Naive thymus-derived CD8-positive, alpha-beta T cell (primary cell): ENCODE measurements at regions of chr9 and their contacts with region 1.

Region 1: DNA sequence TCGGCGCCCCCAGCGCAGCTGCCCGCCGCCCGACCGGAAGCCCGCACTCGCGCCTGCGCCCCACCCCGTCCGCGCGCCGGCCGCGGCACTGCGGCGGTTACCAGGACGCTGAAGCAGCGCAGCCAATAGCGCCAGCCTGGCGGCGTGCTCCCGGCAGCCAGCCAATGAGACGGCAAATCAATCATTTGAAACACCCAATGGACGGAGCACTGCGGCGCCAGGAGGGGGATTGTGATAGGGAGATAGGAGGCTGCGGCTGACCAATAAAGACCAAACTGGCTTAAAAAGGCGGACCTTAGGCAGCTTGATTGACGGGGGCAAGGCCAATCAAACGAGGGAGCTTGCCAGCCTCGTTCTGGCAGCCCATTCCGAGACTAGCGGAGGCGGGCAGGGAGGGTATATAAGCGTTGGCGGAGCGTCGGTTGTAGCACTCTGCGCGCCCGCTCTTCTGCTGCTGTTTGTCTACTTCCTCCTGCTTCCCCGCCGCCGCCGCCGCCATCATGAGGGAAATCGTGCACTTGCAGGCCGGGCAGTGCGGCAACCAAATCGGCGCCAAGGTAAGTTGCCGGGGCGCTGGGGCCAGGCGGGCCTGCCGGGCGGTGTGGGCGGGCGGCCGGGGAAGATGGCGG is at the start of gene TUBB4B:
- DNase-seq: peak in 9 of 10 donors; percentile 89 to 100 (median 98)
- ATAC-seq: peak; percentile 82
- H3K4me3 Mint-ChIP-seq: peak within 1 kb of the TSS; percentile 84 to 97 (median 92)
- H3K27ac Mint-ChIP-seq: peak within 1 kb of the TSS; percentile 88 to 97 (median 92)
- H3K4me1 Mint-ChIP-seq: peaks cover 7 to 40% (median 30%) of the 10 kb centered on the region in 4 donors
- H3K27me3 Mint-ChIP-seq: peaks cover 0 to 3% (median 0%) of the 10 kb centered on the region in 5 donors
- polyA plus RNA-seq, gene TUBB4B: 10.8 to 23.4 (median 22.5) TPM

Region 2: GRCh38 chr9:137114610-137115391 is 126.2 kb before region 1 on chr9 and contains the start of gene DPP7:
- POLR2A ChIA-PET with region 1: interaction called, 11 read pairs
- DNase-seq: peak; percentile 67 to 87 (median 78)
- ATAC-seq: peak; percentile 94
- H3K4me3 Mint-ChIP-seq: peak within 1 kb of the TSS; percentile 45 to 79 (median 73)
- H3K27ac Mint-ChIP-seq: peak within 1 kb of the TSS in 6 of 10 donors; percentile 15 to 80 (median 62)
- H3K4me1 Mint-ChIP-seq: peaks cover 0 to 18% (median 5%) of the 10 kb centered on the region in 4 donors
- H3K27me3 Mint-ChIP-seq: no peaks in the 10 kb centered on the region
- polyA plus RNA-seq, gene DPP7: 98.7 to 126 (median 121) TPM

Region 3: GRCh38 chr9:137188490-137189296 is 52.3 kb before region 1 on chr9 and contains the starts of genes ANAPC2 and SSNA1:
- POLR2A ChIA-PET with region 1: interaction called, 15 read pairs
- DNase-seq: peak; percentile 83 to 95 (median 94)
- ATAC-seq: peak; percentile 79
- H3K4me3 Mint-ChIP-seq: peak within 1 kb of the TSS; percentile 87 to 96 (median 92)
- H3K27ac Mint-ChIP-seq: peak within 1 kb of the TSS; percentile 83 to 98 (median 94)
- H3K4me1 Mint-ChIP-seq: peaks cover 8 to 50% (median 41%) of the 10 kb centered on the region in 4 donors
- H3K27me3 Mint-ChIP-seq: no peaks in the 10 kb centered on the region
- polyA plus RNA-seq, gene ANAPC2: 3.4 to 5.9 (median 4.3) TPM
- polyA plus RNA-seq, gene SSNA1: 97.8 to 123 (median 119) TPM

Region 4: GRCh38 chr9:137223078-137223970 is 17.7 kb before region 1 on chr9:
- POLR2A ChIA-PET with region 1: interaction called, 40 read pairs
- DNase-seq: peak; percentile 95 to 100 (median 98)
- ATAC-seq: peak; percentile 90 to 93
- H3K4me3 Mint-ChIP-seq: peak overlapping the region; percentile 73 to 89 (median 82)
- H3K27ac Mint-ChIP-seq: peak overlapping the region; percentile 60 to 92 (median 82)
- H3K4me1 Mint-ChIP-seq: peaks cover 5 to 14% (median 12%) of the 10 kb centered on the region in 4 donors
- H3K27me3 Mint-ChIP-seq: peaks cover 2 to 10% (median 3%) of the 10 kb centered on the region in 5 donors

Region 5: GRCh38 chr9:137277329-137278041 is 36.5 kb after region 1 on chr9 and contains the start of gene TOR4A:
- POLR2A ChIA-PET with region 1: interaction called, 14 read pairs
- DNase-seq: peak in 1 of 10 donors; percentile 32
- ATAC-seq: peak; percentile 60
- H3K4me3 Mint-ChIP-seq: peak within 1 kb of the TSS in 9 of 10 donors; percentile 36 to 78 (median 62)
- H3K27ac Mint-ChIP-seq: peak within 1 kb of the TSS in 3 of 10 donors; percentile 14 to 76 (median 49)
- H3K4me1 Mint-ChIP-seq: peaks cover 14 to 27% (median 20%) of the 10 kb centered on the region in 4 donors
- H3K27me3 Mint-ChIP-seq: peaks cover under 1 to 40% (median 14%) of the 10 kb centered on the region in 5 donors
- polyA plus RNA-seq, gene TOR4A: 0.12 to 0.15 TPM in 2 of 3 donors, not detected in the other